ENCODE measurements at regions of chr4 and their contacts with region 1.

Region 1: DNA sequence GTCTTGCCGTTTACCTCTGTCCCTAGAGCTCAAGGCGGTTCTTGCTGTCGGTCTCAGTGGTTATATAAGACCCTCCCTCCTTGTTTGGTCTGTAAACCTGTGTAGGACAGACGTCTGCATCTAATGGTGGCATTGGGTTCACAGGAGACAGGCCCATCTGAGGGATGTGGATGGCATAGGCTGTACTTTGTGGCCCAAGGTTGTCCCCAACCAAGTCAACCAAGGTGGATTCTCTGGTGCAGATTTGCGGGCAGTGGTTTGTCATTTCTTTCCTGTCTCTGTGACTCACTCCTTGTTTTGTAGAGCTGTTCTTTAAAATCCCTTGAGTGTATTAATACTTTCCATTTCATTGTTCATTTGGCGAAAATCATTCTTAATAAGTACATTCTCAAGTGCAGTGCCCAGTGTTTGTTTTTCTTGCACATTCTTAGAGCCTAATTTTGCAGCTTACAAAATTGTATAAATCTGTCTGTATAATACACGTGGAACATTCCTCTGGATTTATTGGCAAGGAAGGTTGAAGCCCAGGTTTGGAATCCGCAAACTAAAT is 68.0 kb upstream of the TLR2 start:
- DNase-seq: peak; percentile 72
- H3K4me3 Mint-ChIP-seq: no peak overlapping the region
- H3K27ac Mint-ChIP-seq: peak overlapping the region; percentile 2
- H3K4me1 Mint-ChIP-seq: peaks cover 29% of the 10 kb centered on the region
- H3K27me3 Mint-ChIP-seq: no peaks in the 10 kb centered on the region

Region 2: DNA sequence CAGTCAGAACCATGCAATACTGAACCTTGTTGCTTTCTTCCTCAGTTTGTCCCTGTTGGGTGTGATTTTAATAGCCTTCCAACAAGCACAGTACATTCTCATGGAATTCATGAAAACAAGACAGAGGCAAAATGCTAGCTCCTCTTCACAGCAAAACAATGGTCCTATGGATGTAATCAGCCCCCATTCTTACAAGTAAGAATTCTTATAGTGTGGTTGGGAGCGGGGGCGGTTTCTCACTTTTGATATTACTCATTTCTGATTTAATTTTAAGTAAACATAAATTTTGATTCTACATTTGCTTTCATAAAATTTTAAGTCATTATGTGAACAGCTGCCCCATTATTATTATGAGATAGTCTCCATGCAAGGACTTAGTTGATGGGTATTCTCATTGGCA is 12.8 kb before region 1 on chr4:
- intact Hi-C with region 1: loop called (anchors 2 kb)
- DNase-seq: peak; percentile 50
- H3K4me3 Mint-ChIP-seq: no peak overlapping the region
- H3K27ac Mint-ChIP-seq: no peak overlapping the region
- H3K4me1 Mint-ChIP-seq: peaks cover 10% of the 10 kb centered on the region
- H3K27me3 Mint-ChIP-seq: no peaks in the 10 kb centered on the region

Region 3: GRCh38 chr4:154277172-154277571 is 661.1 kb after region 1 on chr4:
- intact Hi-C with region 1: no loop called
- DNase-seq: no peak
- H3K4me3 Mint-ChIP-seq: no peak overlapping the region
- H3K27ac Mint-ChIP-seq: no peak overlapping the region
- H3K4me1 Mint-ChIP-seq: no peaks in the 10 kb centered on the region
- H3K27me3 Mint-ChIP-seq: peaks cover 4% of the 10 kb centered on the region